PC-9 (cell line): ENCODE measurements at regions of chr1 and their contacts with region 1.

Region 1: DNA sequence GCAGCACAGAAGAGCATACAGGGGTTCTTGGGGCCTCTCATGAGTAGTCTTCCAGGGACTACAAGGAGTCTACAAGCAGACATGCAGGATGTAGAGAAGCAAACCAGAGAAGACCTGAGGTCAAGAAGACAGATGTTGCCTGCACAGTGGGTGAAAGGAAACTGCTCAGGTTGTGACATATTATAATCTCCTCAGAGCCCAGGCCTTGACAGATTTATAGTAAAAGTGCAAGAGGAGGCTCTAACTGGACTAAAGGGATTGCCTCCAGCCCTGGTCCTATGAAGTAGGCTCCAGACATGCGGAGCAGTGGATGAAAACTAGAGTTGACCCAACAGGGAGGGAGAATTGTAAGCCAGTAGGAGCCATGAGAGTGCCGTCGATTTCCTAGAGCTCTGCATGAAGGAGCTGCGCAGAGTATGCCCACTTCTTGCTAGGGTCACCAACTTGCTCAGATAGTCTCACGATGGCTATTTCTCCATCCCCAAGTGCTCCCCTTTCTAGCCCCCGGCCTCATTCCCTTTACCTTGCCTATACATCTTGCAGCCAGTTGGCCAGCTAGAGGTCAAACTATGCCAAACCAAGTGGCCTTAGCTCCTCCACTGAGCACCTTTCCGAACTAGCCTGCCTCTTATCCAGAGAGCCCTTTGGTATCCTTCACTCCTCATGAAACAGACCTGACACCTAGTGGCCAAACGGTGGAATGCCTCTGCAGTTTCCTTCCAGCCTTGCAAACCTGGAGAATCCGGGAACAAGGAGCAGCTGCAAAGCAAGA is 36.2 kb upstream of the IPO9 start:
- DNase-seq: peak; percentile 65 to 73
- H3K4me3 ChIP-seq: no peak overlapping the region
- H3K27ac ChIP-seq: no peak overlapping the region
- H3K4me1 ChIP-seq: no peaks in the 10 kb centered on the region
- H3K27me3 ChIP-seq: no peaks in the 10 kb centered on the region
- CTCF ChIP-seq: peak; percentile 98

Region 2: DNA sequence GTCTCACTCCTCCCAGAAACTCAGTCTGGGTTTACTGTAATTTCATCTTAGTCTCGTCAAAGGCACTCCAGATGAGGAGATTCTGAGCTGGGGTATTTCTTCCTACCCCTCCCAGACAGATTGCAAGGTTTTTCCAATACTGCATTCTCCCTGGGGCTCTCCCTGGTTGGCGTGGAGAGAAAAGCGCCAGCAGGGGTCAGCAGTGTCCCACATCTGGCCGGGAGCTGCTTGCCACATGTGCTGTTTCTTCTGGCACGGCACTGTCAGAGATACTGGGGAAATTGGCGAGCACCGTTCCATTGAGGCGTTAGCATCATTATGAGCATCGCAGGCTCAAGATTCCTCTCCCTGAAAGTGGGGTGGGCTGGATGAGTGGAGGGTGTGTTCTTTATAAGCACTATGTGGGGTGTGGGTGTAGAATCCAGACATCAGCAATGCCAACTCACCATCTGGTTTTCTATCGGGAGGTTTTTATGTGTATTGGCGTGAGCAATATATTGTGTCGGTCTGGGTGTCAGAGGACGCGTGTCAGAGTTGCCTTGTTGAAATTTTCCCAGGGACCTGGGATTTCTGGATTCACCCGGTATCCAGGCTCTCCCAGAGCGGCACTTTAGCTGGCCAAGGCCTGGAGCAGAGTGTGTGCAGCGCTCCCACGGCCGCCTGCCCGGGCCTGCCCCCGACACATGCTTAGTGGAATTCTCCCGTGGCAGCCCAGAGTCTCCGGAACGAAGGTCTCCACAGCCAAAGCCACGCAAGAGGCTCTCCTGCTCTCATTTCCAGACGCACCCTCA is 261.8 kb before region 1 on chr1:
- CTCF ChIA-PET with region 1: no interaction called
- POLR2A ChIA-PET with region 1: no interaction called
- intact Hi-C with region 1: loop called (anchors 2 kb)
- DNase-seq: peak; percentile 48 to 78
- H3K4me3 ChIP-seq: no peak overlapping the region
- H3K27ac ChIP-seq: no peak overlapping the region
- H3K4me1 ChIP-seq: peaks cover 16% of the 10 kb centered on the region
- H3K27me3 ChIP-seq: no peaks in the 10 kb centered on the region
- CTCF ChIP-seq: peak; percentile 77

Region 3: DNA sequence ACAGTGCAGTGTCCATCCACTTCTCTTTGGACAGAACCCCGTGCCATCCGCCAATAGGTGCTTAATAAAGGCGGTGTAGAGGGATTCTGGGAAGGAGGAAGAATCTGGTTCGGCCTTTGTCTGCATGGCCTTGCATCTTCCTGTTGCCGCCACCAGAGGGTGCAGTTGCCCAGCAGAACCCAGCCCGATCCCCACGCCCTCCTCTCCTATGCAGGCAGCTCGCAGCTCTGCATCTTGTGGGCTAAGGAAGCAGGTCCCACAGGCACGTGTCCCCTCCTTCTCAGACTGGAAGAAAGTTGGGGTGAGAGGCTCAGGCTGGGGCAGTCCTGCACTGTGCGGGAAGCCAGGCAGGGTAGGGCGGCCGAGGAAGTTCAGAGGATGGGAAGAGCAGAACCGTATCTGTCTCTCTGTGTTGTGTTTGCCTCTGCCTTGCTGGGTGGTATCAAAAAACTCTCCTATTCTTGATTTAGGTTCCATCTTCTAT is 233.0 kb before region 1 on chr1:
- CTCF ChIA-PET with region 1: interaction called, 12 read pairs
- POLR2A ChIA-PET with region 1: no interaction called
- intact Hi-C with region 1: loop called (anchors 1 kb)
- DNase-seq: peak; percentile 53 to 73
- H3K4me3 ChIP-seq: no peak overlapping the region
- H3K27ac ChIP-seq: no peak overlapping the region
- H3K4me1 ChIP-seq: peaks cover 3% of the 10 kb centered on the region; the same call in 1 of the 2 replicates
- H3K27me3 ChIP-seq: no peaks in the 10 kb centered on the region
- CTCF ChIP-seq: peak; percentile 92

Region 4: DNA sequence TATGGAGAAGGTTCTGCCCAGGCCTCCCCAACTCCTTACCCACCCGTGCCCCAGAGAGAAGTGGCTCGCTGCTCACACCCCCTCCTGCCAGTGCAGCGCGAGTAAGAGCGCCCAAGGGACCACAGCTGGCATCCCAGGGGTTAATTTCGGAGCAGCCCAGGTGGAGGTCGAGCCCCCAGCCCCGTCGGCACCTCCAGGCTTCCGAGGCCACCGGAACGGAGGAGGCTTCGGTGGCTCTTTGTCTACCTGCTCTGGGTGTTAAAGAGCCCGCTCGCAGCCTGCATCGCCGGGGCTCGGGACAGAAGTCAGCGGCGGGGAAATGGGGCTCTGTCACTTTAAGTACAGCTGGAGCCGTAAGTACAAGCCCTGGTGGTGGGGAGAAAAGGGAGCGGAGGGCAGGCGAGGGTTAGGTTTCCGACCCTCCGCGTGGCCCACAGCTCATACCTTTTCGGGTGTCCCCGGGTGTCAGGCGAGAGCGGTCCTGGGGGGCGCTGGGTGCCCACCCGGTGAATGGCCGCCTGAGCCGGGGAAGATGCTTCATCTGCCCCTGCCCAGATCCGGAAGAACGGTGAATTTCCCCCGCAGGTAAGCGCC is 53.1 kb before region 1 on chr1:
- CTCF ChIA-PET with region 1: interaction called, 5 read pairs
- POLR2A ChIA-PET with region 1: interaction called, 5 read pairs
- intact Hi-C with region 1: loop called (anchors 2 kb)
- DNase-seq: peak; percentile 65 to 79
- H3K4me3 ChIP-seq: peak overlapping the region; percentile 68
- H3K27ac ChIP-seq: no peak overlapping the region
- H3K4me1 ChIP-seq: peaks cover 23% of the 10 kb centered on the region
- H3K27me3 ChIP-seq: no peaks in the 10 kb centered on the region
- CTCF ChIP-seq: no peak

Region 5: DNA sequence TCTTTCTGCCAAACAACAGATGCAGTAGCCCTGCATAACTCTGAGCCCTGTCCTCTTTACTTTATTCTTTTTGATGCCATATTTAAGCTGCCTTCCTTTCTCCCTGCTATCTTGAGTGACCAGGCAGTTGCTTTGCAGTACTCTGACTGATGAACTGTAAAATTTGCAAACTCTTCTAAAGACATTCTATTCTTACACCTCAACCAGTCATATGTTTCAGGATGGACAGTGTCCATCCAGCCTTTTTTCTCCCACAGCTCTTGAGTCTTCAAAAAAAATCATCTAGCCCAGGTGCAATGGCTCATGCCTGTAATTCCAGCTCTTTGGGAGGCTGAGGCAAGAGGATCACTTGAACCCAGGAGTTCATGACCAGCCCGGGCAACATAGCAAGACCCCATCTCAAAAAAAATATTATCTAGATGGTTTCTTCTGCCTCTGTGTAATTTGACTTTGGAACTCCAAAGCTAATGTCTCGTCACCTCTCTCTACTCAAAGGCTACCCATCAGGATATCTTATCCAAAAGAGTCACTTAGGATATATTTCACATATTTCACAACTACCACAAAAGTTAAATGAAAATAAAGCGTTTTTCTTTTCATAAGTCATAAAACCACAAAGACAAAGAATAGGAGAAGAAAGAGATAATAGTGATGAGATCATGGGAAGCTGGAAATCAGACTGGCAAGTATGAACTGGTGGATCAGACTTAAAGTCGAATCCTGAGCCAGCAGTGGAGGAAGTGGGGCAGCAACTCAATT is 18.3 kb before region 1 on chr1:
- CTCF ChIA-PET with region 1: no interaction called
- POLR2A ChIA-PET with region 1: no interaction called
- intact Hi-C with region 1: no loop called
- DNase-seq: no peak
- H3K4me3 ChIP-seq: no peak overlapping the region
- H3K27ac ChIP-seq: no peak overlapping the region
- H3K4me1 ChIP-seq: no peaks in the 10 kb centered on the region
- H3K27me3 ChIP-seq: no peaks in the 10 kb centered on the region
- CTCF ChIP-seq: no peak

Region 6: DNA sequence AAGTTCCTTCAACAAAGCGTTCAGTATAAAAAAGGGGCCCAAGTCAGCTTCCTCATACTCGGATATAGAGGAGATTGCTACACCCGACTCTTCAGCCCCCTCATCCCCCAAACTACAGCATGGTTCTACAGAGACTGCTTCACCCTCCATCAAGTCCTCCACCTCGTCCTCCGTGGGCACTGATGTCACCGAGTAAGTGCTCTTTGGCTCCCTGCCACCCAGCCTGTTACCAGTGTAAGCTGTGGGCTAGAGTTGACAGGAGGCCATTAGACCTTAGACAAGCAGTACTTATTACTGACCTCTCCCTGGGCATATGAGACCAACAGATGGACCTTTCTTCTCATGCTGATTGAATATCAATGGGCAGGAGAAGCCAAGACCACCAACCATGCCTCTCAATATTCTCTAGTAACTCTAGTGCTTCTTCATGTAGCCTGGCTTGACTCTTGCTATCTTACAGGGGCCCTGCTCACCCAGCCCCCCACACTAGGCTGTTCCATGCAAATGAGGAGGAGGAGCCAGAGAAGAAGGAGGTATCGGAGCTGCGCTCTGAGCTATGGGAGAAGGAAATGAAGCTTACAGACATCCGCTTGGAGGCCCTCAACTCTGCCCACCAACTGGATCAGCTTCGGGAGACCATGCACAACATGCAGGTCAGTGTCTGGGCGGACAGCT is 15.4 kb after region 1 on chr1:
- CTCF ChIA-PET with region 1: interaction called, 12 read pairs
- POLR2A ChIA-PET with region 1: no interaction called
- intact Hi-C with region 1: no loop called
- DNase-seq: no peak
- H3K4me3 ChIP-seq: no peak overlapping the region
- H3K27ac ChIP-seq: no peak overlapping the region
- H3K4me1 ChIP-seq: no peaks in the 10 kb centered on the region
- H3K27me3 ChIP-seq: no peaks in the 10 kb centered on the region
- CTCF ChIP-seq: no peak

Region 7: DNA sequence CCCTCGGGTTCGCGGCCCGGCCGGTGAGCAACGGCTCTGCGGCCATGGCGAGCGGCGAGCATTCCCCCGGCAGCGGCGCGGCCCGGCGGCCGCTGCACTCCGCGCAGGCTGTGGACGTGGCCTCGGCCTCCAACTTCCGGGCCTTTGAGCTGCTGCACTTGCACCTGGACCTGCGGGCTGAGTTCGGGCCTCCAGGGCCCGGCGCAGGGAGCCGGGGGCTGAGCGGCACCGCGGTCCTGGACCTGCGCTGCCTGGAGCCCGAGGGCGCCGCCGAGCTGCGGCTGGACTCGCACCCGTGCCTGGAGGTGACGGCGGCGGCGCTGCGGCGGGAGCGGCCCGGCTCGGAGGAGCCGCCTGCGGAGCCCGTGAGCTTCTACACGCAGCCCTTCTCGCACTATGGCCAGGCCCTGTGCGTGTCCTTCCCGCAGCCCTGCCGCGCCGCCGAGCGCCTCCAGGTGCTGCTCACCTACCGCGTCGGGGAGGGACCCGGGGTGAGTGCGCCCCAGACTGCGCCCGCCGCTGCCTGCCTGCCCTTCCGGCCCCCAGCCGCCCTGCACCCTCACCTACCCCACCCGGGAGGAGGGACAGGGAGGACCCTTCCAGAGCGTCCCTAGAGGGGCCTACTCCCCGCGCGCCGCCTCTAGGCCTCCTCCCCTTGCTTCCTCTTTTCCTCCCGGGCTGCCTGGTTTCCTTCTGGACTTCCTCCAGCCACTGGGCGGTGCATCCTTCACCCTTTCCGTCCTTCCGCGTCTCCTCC is 190.1 kb after region 1 on chr1 and contains the start of gene RNPEP:
- CTCF ChIA-PET with region 1: interaction called, 4 read pairs
- POLR2A ChIA-PET with region 1: interaction called, 23 read pairs
- intact Hi-C with region 1: no loop called
- DNase-seq: peak; percentile 73 to 76
- H3K4me3 ChIP-seq: peak within 1 kb of the TSS; percentile 72
- H3K27ac ChIP-seq: peak within 1 kb of the TSS; percentile 16
- H3K4me1 ChIP-seq: peaks cover 14% of the 10 kb centered on the region
- H3K27me3 ChIP-seq: no peaks in the 10 kb centered on the region
- CTCF ChIP-seq: no peak; the same call in 1 of the 2 replicates
- total RNA-seq, gene RNPEP: 108 and 123 TPM in 2 replicates